SK-N-SH (cell line): ENCODE measurements at regions of chr1 and their contacts with region 1.

Region 1: GRCh38 chr1:207885129-207886032 is 25.5 kb downstream of the CD34 start:
- DNase-seq: peak; percentile 82
- H3K4me3 ChIP-seq: no peak overlapping the region; a peak in 1 of 4 replicates
- H3K27ac ChIP-seq: no peak overlapping the region
- H3K4me1 ChIP-seq: peaks cover 10 to 14% of the 10 kb centered on the region in 2 experiments
- H3K27me3 ChIP-seq: no peaks in the 10 kb centered on the region; the same call in 1 of the 2 replicates
- CTCF ChIP-seq: peak; percentile 95
- EP300 ChIP-seq: no peak
- RAD21 ChIP-seq: peak; percentile 91

Region 2: DNA sequence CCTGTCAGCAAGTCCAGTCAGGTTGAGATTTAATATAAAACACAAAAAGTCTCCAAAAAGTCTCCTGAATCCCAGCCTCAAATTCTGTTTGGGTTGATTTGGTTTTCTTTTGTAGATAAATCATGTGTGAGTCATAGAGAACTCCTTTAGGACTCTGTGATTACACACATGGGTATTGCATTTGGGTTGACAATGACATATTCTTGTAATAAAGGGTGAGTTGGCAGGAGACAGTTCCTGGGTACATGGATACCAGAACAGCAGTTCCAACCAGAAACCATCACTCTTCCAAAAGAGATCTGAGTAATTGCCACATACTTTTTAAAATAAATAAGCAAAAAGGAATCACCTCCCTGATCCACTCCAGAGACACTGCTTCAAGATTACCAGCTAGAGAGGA is 422.4 kb before region 1 on chr1:
- CTCF ChIA-PET with region 1: no interaction called
- POLR2A ChIA-PET with region 1: no interaction called
- DNase-seq: no peak
- H3K4me3 ChIP-seq: no peak overlapping the region
- H3K27ac ChIP-seq: no peak overlapping the region
- H3K4me1 ChIP-seq: no peaks in the 10 kb centered on the region
- H3K27me3 ChIP-seq: no peaks in the 10 kb centered on the region; the same call in 1 of the 2 replicates
- CTCF ChIP-seq: no peak
- EP300 ChIP-seq: no peak
- RAD21 ChIP-seq: no peak

Region 3: DNA sequence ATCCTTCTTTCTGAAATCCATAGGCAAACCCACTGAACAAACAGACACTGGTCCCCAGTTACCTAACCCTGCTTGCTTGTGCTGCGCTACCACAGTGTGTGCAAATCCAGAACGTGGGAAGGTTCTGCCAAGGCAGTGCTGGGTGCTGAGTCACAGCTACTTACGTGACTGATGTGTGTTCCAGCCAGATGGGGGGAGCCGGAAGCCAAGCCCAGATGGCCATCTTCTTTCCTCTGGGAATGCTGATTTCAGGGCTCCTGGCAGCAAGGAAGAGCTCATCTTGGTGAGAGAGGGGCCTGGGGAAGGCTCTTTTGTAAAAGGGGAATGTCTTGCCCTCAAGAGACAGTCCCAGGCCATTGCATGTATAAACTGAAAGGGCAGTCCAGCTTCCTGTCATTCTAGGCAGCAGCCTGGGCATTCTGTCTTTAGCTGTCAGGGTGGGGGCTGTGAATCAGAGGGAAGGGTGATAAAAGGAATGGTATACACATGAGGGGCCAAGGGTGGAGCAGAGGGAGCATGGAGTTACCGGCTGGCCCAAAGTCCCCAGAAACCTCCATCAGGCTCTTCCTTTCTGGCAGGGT is 79.5 kb before region 1 on chr1:
- CTCF ChIA-PET with region 1: no interaction called
- POLR2A ChIA-PET with region 1: no interaction called
- DNase-seq: no peak
- H3K4me3 ChIP-seq: no peak overlapping the region
- H3K27ac ChIP-seq: peak overlapping the region in 1 of 2 experiments; percentile 63; a peak in 2 of 4 replicates
- H3K4me1 ChIP-seq: peaks cover 0 to 7% of the 10 kb centered on the region in 2 experiments; a peak in 2 of 4 replicates
- H3K27me3 ChIP-seq: no peaks in the 10 kb centered on the region
- CTCF ChIP-seq: no peak
- EP300 ChIP-seq: no peak
- RAD21 ChIP-seq: no peak

Region 4: GRCh38 chr1:207897188-207897587 is 11.8 kb after region 1 on chr1:
- CTCF ChIA-PET with region 1: interaction called, 96 read pairs
- POLR2A ChIA-PET with region 1: no interaction called
- DNase-seq: peak; percentile 48
- H3K4me3 ChIP-seq: no peak overlapping the region
- H3K27ac ChIP-seq: no peak overlapping the region
- H3K4me1 ChIP-seq: no peaks in the 10 kb centered on the region
- H3K27me3 ChIP-seq: no peaks in the 10 kb centered on the region
- CTCF ChIP-seq: peak; percentile 49
- EP300 ChIP-seq: no peak
- RAD21 ChIP-seq: peak; percentile 61

Region 5: GRCh38 chr1:207944571-207944970 is 59.2 kb after region 1 on chr1:
- CTCF ChIA-PET with region 1: interaction called, 10 read pairs
- POLR2A ChIA-PET with region 1: no interaction called
- DNase-seq: no peak
- H3K4me3 ChIP-seq: no peak overlapping the region
- H3K27ac ChIP-seq: peak overlapping the region in 1 of 2 experiments; percentile 18; a peak in 1 of 4 replicates
- H3K4me1 ChIP-seq: peaks cover 0 to 4% of the 10 kb centered on the region in 2 experiments; a peak in 2 of 4 replicates
- H3K27me3 ChIP-seq: no peaks in the 10 kb centered on the region
- CTCF ChIP-seq: no peak
- EP300 ChIP-seq: 0 out of 4 replicates have a peak, but pooled peaks of 1 of the 2 experiments have one; percentile 7
- RAD21 ChIP-seq: no peak

Region 6: DNA sequence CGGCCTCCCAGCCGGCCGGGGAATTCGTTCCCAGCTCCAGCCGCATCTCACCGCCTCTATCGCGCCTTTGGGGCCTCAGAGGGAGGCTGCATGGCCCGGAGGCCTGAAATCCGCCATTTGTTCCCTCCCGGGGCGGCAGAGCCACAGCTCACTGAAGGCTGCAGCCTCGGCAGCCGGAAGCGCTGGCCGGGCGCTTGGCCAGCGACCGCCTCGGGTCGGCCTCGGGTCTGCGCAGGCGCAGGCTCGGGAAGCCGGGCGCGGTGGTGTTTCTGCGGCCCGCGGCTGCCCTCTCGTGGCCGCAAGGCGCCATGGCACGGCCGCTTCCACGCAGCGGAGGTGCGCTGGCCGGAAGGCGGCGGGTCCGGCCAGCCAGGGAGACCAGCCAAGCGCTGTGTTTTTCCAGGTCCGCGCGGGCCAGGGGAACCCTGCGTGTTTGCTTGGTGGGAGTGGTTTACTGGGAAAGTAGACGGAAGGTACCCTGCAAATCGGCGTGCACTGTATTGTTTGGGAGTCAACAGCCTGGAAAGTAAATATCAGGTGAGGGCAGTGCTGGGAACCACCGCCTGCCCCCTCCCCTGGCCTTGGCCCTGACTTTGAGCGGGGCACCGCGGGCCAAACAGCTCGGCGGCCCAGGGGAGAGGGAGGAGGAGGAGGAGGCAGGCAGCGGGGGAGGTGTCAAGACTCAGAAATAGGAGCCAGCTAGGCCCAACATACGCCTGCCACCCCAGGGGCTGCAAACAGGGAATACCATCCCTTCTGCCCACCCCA is 78.2 kb after region 1 on chr1:
- CTCF ChIA-PET with region 1: interaction called, 164 read pairs
- POLR2A ChIA-PET with region 1: interaction called, 20 read pairs
- DNase-seq: peak; percentile 100
- H3K4me3 ChIP-seq: peak overlapping the region; percentile 54 to 55; a peak in 3 of 4 replicates
- H3K27ac ChIP-seq: peak overlapping the region; percentile 37 to 93; a peak in 3 of 4 replicates
- H3K4me1 ChIP-seq: peaks cover 0 to 15% of the 10 kb centered on the region in 2 experiments; a peak in 3 of 4 replicates
- H3K27me3 ChIP-seq: no peaks in the 10 kb centered on the region
- CTCF ChIP-seq: peak; percentile 95
- EP300 ChIP-seq: peak in 1 of 2 experiments; percentile 15; a peak in 1 of 4 replicates
- RAD21 ChIP-seq: peak; percentile 98

Region 7: GRCh38 chr1:207981976-207982375 is 96.6 kb after region 1 on chr1:
- CTCF ChIA-PET with region 1: interaction called, 17 read pairs
- POLR2A ChIA-PET with region 1: no interaction called
- DNase-seq: peak; percentile 49
- H3K4me3 ChIP-seq: no peak overlapping the region; a peak in 1 of 4 replicates
- H3K27ac ChIP-seq: no peak overlapping the region
- H3K4me1 ChIP-seq: no peaks in the 10 kb centered on the region
- H3K27me3 ChIP-seq: no peaks in the 10 kb centered on the region; the same call in 1 of the 2 replicates
- CTCF ChIP-seq: peak; percentile 52
- EP300 ChIP-seq: no peak
- RAD21 ChIP-seq: no peak